Calu3 (cell line): ENCODE measurements at regions of chr16 and their contacts with region 1.

Region 1: GRCh38 chr16:48687421-48688038 is 77.5 kb upstream of the N4BP1 start:
- DNase-seq: peak; percentile 71
- H3K4me3 Mint-ChIP-seq: no peak overlapping the region
- H3K27ac Mint-ChIP-seq: no peak overlapping the region
- H3K4me1 Mint-ChIP-seq: no peaks in the 10 kb centered on the region
- H3K27me3 Mint-ChIP-seq: peaks cover 82% of the 10 kb centered on the region
- CTCF ChIP-seq: peak; percentile 74

Region 2: GRCh38 chr16:48164907-48165726 is 522.4 kb before region 1 on chr16:
- CTCF ChIA-PET with region 1: no interaction called
- intact Hi-C with region 1: no loop called
- DNase-seq: peak; percentile 88
- H3K4me3 Mint-ChIP-seq: peak overlapping the region; percentile 8
- H3K27ac Mint-ChIP-seq: peak overlapping the region; percentile 55
- H3K4me1 Mint-ChIP-seq: peaks cover 14% of the 10 kb centered on the region
- H3K27me3 Mint-ChIP-seq: no peaks in the 10 kb centered on the region
- CTCF ChIP-seq: peak; percentile 93

Region 3: DNA sequence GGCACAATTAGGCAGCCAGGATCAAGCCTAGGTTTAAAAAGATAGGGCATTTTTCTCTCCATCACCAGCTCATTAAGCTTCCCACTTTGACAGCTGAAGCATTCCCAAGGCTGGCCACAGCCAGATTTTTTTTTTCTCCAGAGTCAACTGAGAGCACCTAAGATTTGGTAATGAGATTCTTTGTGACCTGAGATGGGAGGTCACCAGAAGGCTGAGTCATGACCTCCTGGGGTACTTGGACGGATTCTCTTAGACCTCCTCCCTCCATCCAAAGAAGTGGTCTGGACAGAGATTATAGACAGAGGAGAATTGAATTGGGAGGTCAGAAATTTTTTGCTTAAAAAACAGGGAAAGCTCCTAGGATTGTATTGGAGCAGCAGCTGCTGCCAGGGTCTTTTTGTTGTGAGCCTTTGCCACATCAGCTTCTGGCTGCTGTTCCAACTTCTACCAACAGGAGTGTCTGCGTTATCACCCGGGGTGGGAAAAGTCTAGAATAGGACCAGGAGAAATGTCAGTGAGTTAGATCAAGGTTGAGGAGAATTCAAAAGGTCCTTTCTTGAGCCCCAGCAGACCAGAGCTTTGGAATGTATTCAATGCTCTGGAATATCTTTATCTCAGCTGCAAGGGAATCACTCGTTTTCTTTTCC is 143.7 kb after region 1 on chr16:
- CTCF ChIA-PET with region 1: no interaction called
- intact Hi-C with region 1: loop called (anchors 10 kb)
- DNase-seq: no peak
- H3K4me3 Mint-ChIP-seq: no peak overlapping the region
- H3K27ac Mint-ChIP-seq: no peak overlapping the region
- H3K4me1 Mint-ChIP-seq: no peaks in the 10 kb centered on the region
- H3K27me3 Mint-ChIP-seq: no peaks in the 10 kb centered on the region
- CTCF ChIP-seq: no peak

Region 4: GRCh38 chr16:48879223-48880122 is 191.9 kb after region 1 on chr16:
- CTCF ChIA-PET with region 1: no interaction called
- intact Hi-C with region 1: loop called (anchors 10 kb)
- DNase-seq: no peak
- H3K4me3 Mint-ChIP-seq: no peak overlapping the region
- H3K27ac Mint-ChIP-seq: no peak overlapping the region
- H3K4me1 Mint-ChIP-seq: no peaks in the 10 kb centered on the region
- H3K27me3 Mint-ChIP-seq: peaks cover 36% of the 10 kb centered on the region
- CTCF ChIP-seq: no peak

Region 5: DNA sequence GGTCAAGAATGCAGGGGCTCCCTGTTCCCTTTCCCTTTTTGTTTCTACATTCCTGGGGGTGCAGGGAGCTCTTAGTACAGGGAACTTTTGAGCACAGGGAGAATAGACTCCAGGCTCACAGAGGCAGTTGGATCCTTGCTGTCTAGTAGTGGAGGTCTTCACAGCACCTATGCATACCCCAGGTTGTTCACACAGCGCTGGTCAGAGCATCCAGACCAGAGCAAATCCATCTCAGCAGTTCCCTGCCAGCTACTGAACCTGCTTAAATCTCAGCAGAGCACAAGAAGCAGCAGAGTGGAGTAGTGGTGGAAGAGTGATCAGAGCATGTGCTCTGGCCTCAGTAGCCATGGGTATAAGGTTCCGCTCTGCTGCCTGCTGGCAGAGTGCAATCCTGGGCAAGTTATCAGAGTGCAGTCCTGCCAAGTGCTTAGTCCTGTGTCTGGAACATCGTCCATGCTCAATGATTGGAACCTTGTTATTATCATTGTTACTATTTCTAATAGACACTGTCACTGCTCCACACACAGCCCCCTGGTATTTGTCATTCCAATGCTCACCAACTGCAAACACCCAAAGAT is 373.7 kb after region 1 on chr16:
- CTCF ChIA-PET with region 1: no interaction called
- intact Hi-C with region 1: loop called (anchors 10 kb)
- DNase-seq: no peak
- H3K4me3 Mint-ChIP-seq: no peak overlapping the region
- H3K27ac Mint-ChIP-seq: no peak overlapping the region
- H3K4me1 Mint-ChIP-seq: no peaks in the 10 kb centered on the region
- H3K27me3 Mint-ChIP-seq: peaks cover 26% of the 10 kb centered on the region
- CTCF ChIP-seq: no peak

Region 6: GRCh38 chr16:49350265-49351095 is 663.0 kb after region 1 on chr16:
- CTCF ChIA-PET with region 1: interaction called, 4 read pairs
- intact Hi-C with region 1: loop called (anchors 1 kb)
- DNase-seq: peak; percentile 81
- H3K4me3 Mint-ChIP-seq: no peak overlapping the region
- H3K27ac Mint-ChIP-seq: no peak overlapping the region
- H3K4me1 Mint-ChIP-seq: no peaks in the 10 kb centered on the region
- H3K27me3 Mint-ChIP-seq: peaks cover 55% of the 10 kb centered on the region
- CTCF ChIP-seq: peak; percentile 84